ENCODE measurements at regions of chr13 and their contacts with region 1.

Region 1: DNA sequence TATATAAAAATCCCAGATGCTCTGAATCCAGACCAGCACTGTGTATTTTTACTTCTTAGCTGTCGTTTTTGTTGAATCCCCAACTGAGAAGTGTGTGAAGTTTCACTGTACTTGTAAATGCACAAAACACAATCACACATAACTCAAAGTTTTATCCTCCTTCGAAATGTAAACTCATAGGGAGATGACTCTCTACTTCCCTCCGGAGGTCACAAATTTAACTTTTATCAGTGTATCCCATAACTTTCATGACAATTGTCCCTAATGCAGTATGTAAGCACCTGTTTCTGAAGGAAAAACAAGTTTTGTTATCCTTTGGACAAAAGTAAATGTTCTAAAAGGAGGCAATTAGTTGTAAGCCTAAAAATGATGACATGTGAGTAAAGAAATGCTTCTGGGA is 665.0 kb upstream of the SLITRK6 start:
- DNase-seq: peak; percentile 43
- H3K4me3 Mint-ChIP-seq: no peak overlapping the region
- H3K27ac Mint-ChIP-seq: no peak overlapping the region
- H3K4me1 Mint-ChIP-seq: peaks cover 5% of the 10 kb centered on the region
- H3K27me3 Mint-ChIP-seq: no peaks in the 10 kb centered on the region
- CTCF ChIP-seq: peak; percentile 29

Region 2: GRCh38 chr13:85970727-85971126 is 493.5 kb before region 1 on chr13:
- CTCF ChIA-PET with region 1: interaction called, 6 read pairs
- POLR2A ChIA-PET with region 1: no interaction called
- intact Hi-C with region 1: loop called (anchors 2 kb)
- DNase-seq: peak; percentile 25
- H3K4me3 Mint-ChIP-seq: no peak overlapping the region
- H3K27ac Mint-ChIP-seq: no peak overlapping the region
- H3K4me1 Mint-ChIP-seq: peaks cover 10% of the 10 kb centered on the region
- H3K27me3 Mint-ChIP-seq: no peaks in the 10 kb centered on the region
- CTCF ChIP-seq: peak; percentile 34

Region 3: GRCh38 chr13:86085890-86086289 is 378.3 kb before region 1 on chr13:
- CTCF ChIA-PET with region 1: no interaction called
- POLR2A ChIA-PET with region 1: no interaction called
- intact Hi-C with region 1: loop called (anchors 5 kb)
- DNase-seq: peak; percentile 14
- H3K4me3 Mint-ChIP-seq: no peak overlapping the region
- H3K27ac Mint-ChIP-seq: no peak overlapping the region
- H3K4me1 Mint-ChIP-seq: peaks cover 6% of the 10 kb centered on the region
- H3K27me3 Mint-ChIP-seq: no peaks in the 10 kb centered on the region
- CTCF ChIP-seq: peak; percentile 22

Region 4: GRCh38 chr13:86409466-86410241 is 54.5 kb before region 1 on chr13:
- CTCF ChIA-PET with region 1: no interaction called
- POLR2A ChIA-PET with region 1: no interaction called
- intact Hi-C with region 1: no loop called
- DNase-seq: no peak
- H3K4me3 Mint-ChIP-seq: no peak overlapping the region
- H3K27ac Mint-ChIP-seq: no peak overlapping the region
- H3K4me1 Mint-ChIP-seq: no peaks in the 10 kb centered on the region
- H3K27me3 Mint-ChIP-seq: no peaks in the 10 kb centered on the region
- CTCF ChIP-seq: no peak

Region 5: GRCh38 chr13:86846501-86846900 is 382.3 kb after region 1 on chr13:
- CTCF ChIA-PET with region 1: no interaction called
- POLR2A ChIA-PET with region 1: no interaction called
- intact Hi-C with region 1: no loop called
- DNase-seq: no peak
- H3K4me3 Mint-ChIP-seq: no peak overlapping the region
- H3K27ac Mint-ChIP-seq: no peak overlapping the region
- H3K4me1 Mint-ChIP-seq: no peaks in the 10 kb centered on the region
- H3K27me3 Mint-ChIP-seq: no peaks in the 10 kb centered on the region
- CTCF ChIP-seq: no peak

Measured in MCF 10A (cell line).